GM12878 (cell line): ENCODE measurements at regions of chr5 and their contacts with region 1.

Region 1: GRCh38 chr5:149804478-149805450 is 74.7 kb downstream of the PPARGC1B start:
- DNase-seq: peak; percentile 92
- ATAC-seq: peak; percentile 72
- H3K4me3 ChIP-seq: no peak overlapping the region
- H3K27ac ChIP-seq: peak overlapping the region; percentile 99
- H3K4me1 ChIP-seq: peaks cover 60% of the 10 kb centered on the region
- H3K27me3 ChIP-seq: no peaks in the 10 kb centered on the region
- CTCF ChIP-seq: no peak
- EP300 ChIP-seq: peak; percentile 34 to 45; a peak in 2 of 4 replicates
- POLR2A ChIP-seq: peak; percentile 59
- RAD21 ChIP-seq: peak; percentile 20; the same call in 1 of the 2 replicates

Region 2: DNA sequence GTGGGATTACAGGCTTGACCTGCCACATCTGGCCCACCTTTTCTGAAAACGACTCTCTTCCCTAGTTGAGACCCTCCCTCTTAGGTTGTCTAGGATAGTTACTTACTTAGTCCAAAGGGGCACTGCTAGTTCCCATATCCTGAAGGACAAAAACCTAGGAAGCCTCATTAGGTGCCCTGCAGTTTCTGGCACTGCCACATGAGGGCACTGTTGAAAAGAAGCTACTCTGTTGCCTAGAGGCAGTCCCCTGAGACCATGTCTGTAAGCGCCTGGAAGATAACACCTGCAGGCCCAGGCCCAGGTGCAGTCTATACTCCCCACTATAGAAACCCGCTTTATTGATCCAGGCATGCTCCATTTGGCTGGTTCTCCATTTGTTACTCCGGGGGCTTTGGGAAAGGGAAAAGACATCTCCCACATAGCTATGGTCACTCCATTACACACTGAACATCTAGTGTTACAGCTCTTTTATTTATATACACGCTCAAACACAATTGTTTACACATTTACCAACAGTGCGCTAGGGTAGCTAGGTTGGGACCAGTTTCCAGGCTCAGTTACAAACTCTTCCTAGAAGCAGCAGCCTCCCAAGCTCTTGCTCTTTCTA is 148.1 kb before region 1 on chr5:
- CTCF ChIA-PET with region 1: interaction called, 6 read pairs
- POLR2A ChIA-PET with region 1: no interaction called
- RAD21 ChIA-PET with region 1: interaction called, 10 read pairs
- SMC1A ChIA-PET with region 1: interaction called, 7 read pairs
- in situ Hi-C with region 1: no loop called
- intact Hi-C with region 1: no loop called
- DNase-seq: no peak
- ATAC-seq: peak; percentile 73
- H3K4me3 ChIP-seq: no peak overlapping the region
- H3K27ac ChIP-seq: no peak overlapping the region
- H3K4me1 ChIP-seq: no peaks in the 10 kb centered on the region
- H3K27me3 ChIP-seq: no peaks in the 10 kb centered on the region; a peak in 1 of 4 replicates
- CTCF ChIP-seq: peak; percentile 72 to 83 (median 76)
- EP300 ChIP-seq: no peak
- POLR2A ChIP-seq: no peak
- RAD21 ChIP-seq: peak; percentile 69

Region 3: GRCh38 chr5:149707097-149707496 is 97.7 kb before region 1 on chr5:
- CTCF ChIA-PET with region 1: no interaction called
- POLR2A ChIA-PET with region 1: no interaction called
- RAD21 ChIA-PET with region 1: no interaction called
- SMC1A ChIA-PET with region 1: no interaction called
- in situ Hi-C with region 1: no loop called
- intact Hi-C with region 1: no loop called
- DNase-seq: no peak
- ATAC-seq: no peak
- H3K4me3 ChIP-seq: no peak overlapping the region
- H3K27ac ChIP-seq: no peak overlapping the region
- H3K4me1 ChIP-seq: no peaks in the 10 kb centered on the region
- H3K27me3 ChIP-seq: peaks cover 0 to 3% of the 10 kb centered on the region in 2 experiments; a peak in 1 of 4 replicates
- CTCF ChIP-seq: no peak
- EP300 ChIP-seq: no peak
- POLR2A ChIP-seq: no peak
- RAD21 ChIP-seq: no peak

Region 4: DNA sequence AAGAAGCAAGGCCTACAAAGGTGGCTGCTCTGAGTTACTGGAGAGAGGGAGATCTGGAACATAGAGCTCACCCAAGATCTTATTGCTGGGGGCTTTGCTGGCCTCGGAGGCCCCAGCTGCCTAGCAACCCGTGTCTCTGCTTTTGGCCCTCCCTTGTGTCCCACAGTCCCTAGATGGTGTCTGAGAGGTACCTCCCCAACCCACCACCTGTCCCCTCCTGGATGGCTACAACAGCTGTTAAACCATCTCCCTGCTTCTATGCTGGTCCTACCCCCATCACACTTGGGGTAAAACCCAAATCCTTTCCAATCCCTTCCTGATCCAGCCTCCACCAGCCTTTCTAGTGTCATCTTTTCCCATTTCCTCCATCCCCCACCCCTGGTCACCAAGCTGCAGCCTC is 11.9 kb after region 1 on chr5:
- CTCF ChIA-PET with region 1: interaction called, 22 read pairs
- POLR2A ChIA-PET with region 1: interaction called, 12 read pairs
- RAD21 ChIA-PET with region 1: interaction called, 11 read pairs
- SMC1A ChIA-PET with region 1: interaction called, 45 read pairs
- in situ Hi-C with region 1: no loop called
- intact Hi-C with region 1: no loop called
- DNase-seq: no peak
- ATAC-seq: no peak
- H3K4me3 ChIP-seq: no peak overlapping the region
- H3K27ac ChIP-seq: no peak overlapping the region
- H3K4me1 ChIP-seq: peaks cover 1% of the 10 kb centered on the region; the same call in 1 of the 2 replicates
- H3K27me3 ChIP-seq: no peaks in the 10 kb centered on the region
- CTCF ChIP-seq: no peak
- EP300 ChIP-seq: no peak
- POLR2A ChIP-seq: no peak
- RAD21 ChIP-seq: no peak

Region 5: GRCh38 chr5:149822301-149822700 is 17.5 kb after region 1 on chr5:
- CTCF ChIA-PET with region 1: interaction called, 55 read pairs
- POLR2A ChIA-PET with region 1: interaction called, 70 read pairs
- RAD21 ChIA-PET with region 1: interaction called, 139 read pairs
- SMC1A ChIA-PET with region 1: interaction called, 52 read pairs
- in situ Hi-C with region 1: no loop called
- intact Hi-C with region 1: no loop called
- DNase-seq: no peak
- ATAC-seq: no peak
- H3K4me3 ChIP-seq: no peak overlapping the region
- H3K27ac ChIP-seq: no peak overlapping the region
- H3K4me1 ChIP-seq: no peaks in the 10 kb centered on the region
- H3K27me3 ChIP-seq: no peaks in the 10 kb centered on the region
- CTCF ChIP-seq: no peak
- EP300 ChIP-seq: no peak
- POLR2A ChIP-seq: no peak
- RAD21 ChIP-seq: no peak